ENCODE measurements at regions of chr1 and their contacts with region 1.

Region 1: DNA sequence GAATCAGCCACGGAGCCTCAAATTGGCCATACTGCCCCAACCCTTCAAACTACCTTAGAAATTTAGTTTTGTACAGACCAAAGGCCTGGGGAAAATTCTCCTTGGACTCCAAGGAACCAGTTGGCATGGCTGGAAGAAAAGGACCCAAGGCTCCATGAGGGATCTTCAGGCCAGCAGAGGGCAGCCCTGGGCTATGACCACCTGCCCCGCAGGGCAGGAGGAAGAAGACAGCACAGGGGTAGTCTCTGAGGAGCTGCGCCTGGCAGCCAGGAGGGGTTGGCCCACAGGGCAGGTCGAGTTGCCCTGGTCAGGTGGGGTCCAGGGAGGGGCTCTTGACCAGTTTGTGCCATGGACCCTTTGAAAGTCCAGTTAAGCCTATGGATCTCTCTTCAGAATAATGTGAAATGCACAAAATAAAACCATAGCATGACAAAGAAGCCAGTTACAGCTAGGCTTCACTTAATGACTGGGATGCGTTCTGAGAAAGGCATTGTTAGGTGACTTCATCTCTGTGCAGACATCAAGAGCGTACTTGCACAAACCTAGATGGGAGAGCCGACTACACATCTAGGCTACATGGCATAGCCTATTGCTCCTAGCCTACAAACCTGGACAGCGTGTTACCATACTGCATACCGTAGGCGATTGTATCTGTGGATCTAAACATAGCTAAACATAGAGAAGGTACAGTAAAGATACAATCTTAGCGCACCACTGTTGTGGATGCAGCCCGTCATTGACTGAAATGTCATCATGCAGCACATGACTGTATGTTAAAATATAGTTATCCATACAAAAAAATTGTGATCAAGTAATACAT is 26.1 kb downstream of the CACNA1S start:
- DNase-seq: peak in 13 of 14 experiments; percentile 2 to 56 (median 31)
- ATAC-seq: no peak
- H3K4me3 ChIP-seq: no peak overlapping the region
- H3K4me3 Mint-ChIP-seq: no peak overlapping the region
- H3K27ac ChIP-seq: no peak overlapping the region
- H3K27ac Mint-ChIP-seq: no peak overlapping the region
- H3K4me1 ChIP-seq: peaks cover 4% of the 10 kb centered on the region
- H3K4me1 Mint-ChIP-seq: no peaks in the 10 kb centered on the region
- H3K27me3 ChIP-seq: no peaks in the 10 kb centered on the region
- H3K27me3 Mint-ChIP-seq: peaks cover 28% of the 10 kb centered on the region
- CTCF ChIP-seq: peak; percentile 52

Region 2: GRCh38 chr1:200959411-200959921 is 126.7 kb before region 1 on chr1:
- CTCF ChIA-PET with region 1: no interaction called
- POLR2A ChIA-PET with region 1: no interaction called
- intact Hi-C with region 1: no loop called
- DNase-seq: no peak
- ATAC-seq: no peak
- H3K4me3 ChIP-seq: no peak overlapping the region
- H3K4me3 Mint-ChIP-seq: no peak overlapping the region
- H3K27ac ChIP-seq: no peak overlapping the region
- H3K27ac Mint-ChIP-seq: no peak overlapping the region
- H3K4me1 ChIP-seq: no peaks in the 10 kb centered on the region
- H3K4me1 Mint-ChIP-seq: no peaks in the 10 kb centered on the region
- H3K27me3 ChIP-seq: no peaks in the 10 kb centered on the region
- H3K27me3 Mint-ChIP-seq: no peaks in the 10 kb centered on the region
- CTCF ChIP-seq: no peak

Region 3: DNA sequence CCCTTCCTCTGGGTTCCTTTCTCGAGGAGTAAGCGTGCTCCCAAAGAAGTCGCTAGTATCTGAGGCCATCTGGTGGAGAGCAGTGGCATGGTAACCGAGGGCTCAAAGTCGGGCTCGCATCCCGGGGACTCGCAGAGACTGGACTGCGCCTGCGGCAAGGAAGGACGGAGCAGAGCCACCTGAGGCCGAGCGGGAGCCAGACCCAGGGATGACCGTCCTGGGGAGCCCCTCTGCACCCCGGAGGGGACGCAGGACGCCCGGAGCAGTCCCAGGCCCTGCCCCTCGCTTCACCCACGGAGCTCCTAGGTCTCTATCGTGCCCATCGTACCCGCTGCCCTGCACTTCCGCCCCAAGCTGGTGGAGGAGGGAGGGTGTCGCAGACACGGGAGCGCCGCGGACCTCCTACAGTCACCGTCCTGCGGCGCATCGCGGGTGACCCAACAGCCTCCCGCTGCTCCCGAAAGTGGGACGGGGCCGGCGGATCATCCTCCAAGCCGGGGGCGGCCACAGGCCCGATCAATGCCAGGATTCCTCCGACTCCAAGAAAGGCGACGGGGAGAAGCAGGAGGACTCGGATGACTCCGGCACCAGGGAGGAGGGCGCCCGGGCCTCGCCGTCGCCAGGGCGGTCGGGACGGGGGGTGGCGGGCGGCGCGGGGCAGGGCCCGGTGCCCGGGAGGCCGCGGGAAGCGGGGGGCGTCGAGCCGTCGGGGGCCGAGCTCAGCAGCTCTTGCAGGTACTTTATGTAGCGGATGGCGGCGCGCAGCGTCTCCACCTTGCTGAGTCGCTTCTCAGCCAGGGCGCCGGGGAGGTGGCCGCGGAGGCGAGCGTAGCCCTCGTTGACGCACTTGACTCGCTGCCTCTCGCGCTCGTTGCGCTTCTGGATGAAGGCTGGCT is 28.4 kb after region 1 on chr1:
- CTCF ChIA-PET with region 1: interaction called, 7 read pairs
- POLR2A ChIA-PET with region 1: no interaction called
- intact Hi-C with region 1: loop called in 1 of 2 experiments (anchors 1 kb)
- DNase-seq: peak; percentile 45 to 86 (median 64)
- ATAC-seq: peak; percentile 87
- H3K4me3 ChIP-seq: peak overlapping the region; percentile 84
- H3K4me3 Mint-ChIP-seq: peak overlapping the region; percentile 95
- H3K27ac ChIP-seq: peak overlapping the region; percentile 13 to 32
- H3K27ac Mint-ChIP-seq: peak overlapping the region; percentile 76
- H3K4me1 ChIP-seq: peaks cover 16% of the 10 kb centered on the region
- H3K4me1 Mint-ChIP-seq: peaks cover 30% of the 10 kb centered on the region
- H3K27me3 ChIP-seq: no peaks in the 10 kb centered on the region
- H3K27me3 Mint-ChIP-seq: no peaks in the 10 kb centered on the region
- CTCF ChIP-seq: peak; percentile 77

Region 4: DNA sequence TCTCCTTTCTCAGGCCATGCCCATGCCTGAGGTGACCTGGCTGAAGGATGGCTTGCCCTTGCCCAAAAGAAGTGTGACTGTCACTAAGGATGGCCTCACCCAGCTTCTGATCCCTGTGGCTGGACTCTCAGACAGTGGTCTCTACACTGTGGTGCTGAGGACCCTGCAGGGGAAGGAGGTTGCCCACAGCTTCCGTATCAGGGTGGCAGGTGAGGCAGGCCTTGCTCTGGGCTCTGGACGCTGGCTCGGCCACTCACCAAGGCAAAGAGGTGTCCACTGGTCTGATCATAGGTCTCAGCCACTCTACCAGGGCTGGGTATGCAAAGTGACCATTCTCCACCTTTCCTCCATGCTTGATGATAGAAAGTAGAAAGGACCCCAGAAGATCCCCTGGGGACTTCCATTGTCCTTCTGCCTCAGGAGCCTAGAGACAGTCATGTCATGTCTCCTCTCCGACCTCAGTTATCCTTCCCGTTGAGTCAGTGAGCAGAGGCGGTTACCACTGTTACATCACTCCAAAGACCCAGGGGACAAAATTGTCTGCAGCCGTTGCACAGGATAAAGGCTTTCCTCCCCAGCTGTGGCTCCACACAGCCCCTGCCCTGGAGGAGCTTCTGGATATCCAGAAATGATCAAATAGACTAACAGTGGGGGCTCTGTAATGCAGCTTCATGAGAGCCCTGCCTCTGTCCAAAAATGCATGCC is 138.7 kb after region 1 on chr1:
- CTCF ChIA-PET with region 1: no interaction called
- POLR2A ChIA-PET with region 1: no interaction called
- intact Hi-C with region 1: loop called (anchors 5 to 10 kb)
- DNase-seq: peak in 1 of 14 experiments; percentile 27
- ATAC-seq: no peak
- H3K4me3 ChIP-seq: no peak overlapping the region
- H3K4me3 Mint-ChIP-seq: no peak overlapping the region
- H3K27ac ChIP-seq: no peak overlapping the region
- H3K27ac Mint-ChIP-seq: no peak overlapping the region
- H3K4me1 ChIP-seq: no peaks in the 10 kb centered on the region
- H3K4me1 Mint-ChIP-seq: no peaks in the 10 kb centered on the region
- H3K27me3 ChIP-seq: peaks cover 2 to 11% of the 10 kb centered on the region in 2 experiments
- H3K27me3 Mint-ChIP-seq: peaks cover 13% of the 10 kb centered on the region
- CTCF ChIP-seq: no peak

Region 5: GRCh38 chr1:201229771-201230635 is 143.9 kb after region 1 on chr1:
- CTCF ChIA-PET with region 1: no interaction called
- POLR2A ChIA-PET with region 1: no interaction called
- intact Hi-C with region 1: loop called in 1 of 2 experiments (anchors 10 kb)
- DNase-seq: no peak
- ATAC-seq: no peak
- H3K4me3 ChIP-seq: no peak overlapping the region
- H3K4me3 Mint-ChIP-seq: no peak overlapping the region
- H3K27ac ChIP-seq: no peak overlapping the region
- H3K27ac Mint-ChIP-seq: no peak overlapping the region
- H3K4me1 ChIP-seq: no peaks in the 10 kb centered on the region
- H3K4me1 Mint-ChIP-seq: no peaks in the 10 kb centered on the region
- H3K27me3 ChIP-seq: peaks cover 2 to 15% of the 10 kb centered on the region in 2 experiments
- H3K27me3 Mint-ChIP-seq: peaks cover 32% of the 10 kb centered on the region
- CTCF ChIP-seq: no peak

Region 6: DNA sequence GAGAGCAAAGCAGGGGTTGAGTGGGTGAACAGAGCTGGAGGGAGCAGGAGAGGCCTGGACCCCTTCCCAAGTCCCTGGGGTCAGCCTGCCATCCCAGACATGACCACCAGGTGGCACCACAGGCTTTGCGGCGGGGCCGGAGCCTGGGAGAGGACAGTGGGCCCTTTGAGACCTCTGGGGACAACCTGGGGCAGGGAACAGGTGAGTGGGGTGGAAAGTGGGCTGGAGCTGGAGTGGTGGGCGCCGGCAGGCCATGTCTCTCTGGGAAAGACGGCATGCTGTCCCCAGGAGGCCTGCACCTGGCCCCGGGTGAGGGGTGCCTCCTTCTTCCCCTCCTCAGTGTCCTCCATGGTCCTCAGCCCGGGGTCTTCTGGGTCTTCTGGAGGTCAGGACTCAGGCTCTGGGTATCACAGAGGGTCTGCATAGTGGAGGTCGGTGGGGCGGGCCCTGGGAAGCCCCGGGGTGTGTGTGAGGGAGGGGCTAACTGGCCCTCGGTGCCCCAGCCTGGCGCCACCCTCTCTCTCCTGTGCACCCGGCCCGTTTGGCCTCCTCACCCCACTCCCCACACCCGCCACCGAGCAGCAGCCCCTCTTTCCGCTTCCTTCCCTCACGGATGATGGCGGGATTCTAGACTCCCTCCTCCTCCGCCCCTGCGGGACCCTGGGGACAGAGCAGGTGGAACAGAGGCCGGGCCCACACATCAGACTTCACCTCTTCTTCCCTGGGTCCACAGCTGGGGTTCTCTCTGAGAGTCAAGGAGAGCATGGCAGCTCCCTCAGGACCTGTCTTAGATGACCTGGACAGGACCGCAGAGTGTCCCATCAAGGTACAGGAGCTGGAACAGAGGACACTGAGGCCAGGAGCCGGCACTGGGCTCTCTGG is 168.7 kb after region 1 on chr1:
- CTCF ChIA-PET with region 1: no interaction called
- POLR2A ChIA-PET with region 1: no interaction called
- intact Hi-C with region 1: no loop called
- DNase-seq: peak; percentile 32 to 72 (median 51)
- ATAC-seq: peak; percentile 59
- H3K4me3 ChIP-seq: no peak overlapping the region
- H3K4me3 Mint-ChIP-seq: no peak overlapping the region
- H3K27ac ChIP-seq: no peak overlapping the region
- H3K27ac Mint-ChIP-seq: no peak overlapping the region
- H3K4me1 ChIP-seq: peaks cover 10% of the 10 kb centered on the region
- H3K4me1 Mint-ChIP-seq: no peaks in the 10 kb centered on the region
- H3K27me3 ChIP-seq: peaks cover 2 to 3% of the 10 kb centered on the region in 2 experiments
- H3K27me3 Mint-ChIP-seq: peaks cover 6% of the 10 kb centered on the region
- CTCF ChIP-seq: peak; percentile 78

Region 7: GRCh38 chr1:201551877-201552731 is 466.0 kb after region 1 on chr1:
- CTCF ChIA-PET with region 1: no interaction called
- POLR2A ChIA-PET with region 1: no interaction called
- intact Hi-C with region 1: no loop called
- DNase-seq: peak in 2 of 14 experiments; percentile 53 to 72
- ATAC-seq: no peak
- H3K4me3 ChIP-seq: no peak overlapping the region
- H3K4me3 Mint-ChIP-seq: no peak overlapping the region
- H3K27ac ChIP-seq: no peak overlapping the region
- H3K27ac Mint-ChIP-seq: no peak overlapping the region
- H3K4me1 ChIP-seq: no peaks in the 10 kb centered on the region
- H3K4me1 Mint-ChIP-seq: no peaks in the 10 kb centered on the region
- H3K27me3 ChIP-seq: no peaks in the 10 kb centered on the region
- H3K27me3 Mint-ChIP-seq: no peaks in the 10 kb centered on the region
- CTCF ChIP-seq: no peak